HepG2 (cell line): ENCODE measurements at regions of chr6 and their contacts with region 1.

Region 1: GRCh38 chr6:18387061-18387721 is at the start of gene RNF144B:
- DNase-seq: peak; percentile 94
- ATAC-seq: peak; percentile 95
- H3K4me3 ChIP-seq: peak within 1 kb of the TSS; percentile 71 to 81 (median 73)
- H3K27ac ChIP-seq: peak within 1 kb of the TSS; percentile 52
- H3K4me1 ChIP-seq: peaks cover 61% of the 10 kb centered on the region
- H3K27me3 ChIP-seq: no peaks in the 10 kb centered on the region; a peak in 2 of 5 replicates
- CTCF ChIP-seq: peak; percentile 34; the same call in 1 of the 2 replicates
- EP300 ChIP-seq: no peak; a peak in 1 of 4 replicates
- POLR2A ChIP-seq: peak; percentile 58 to 76
- RAD21 ChIP-seq: peak; percentile 46
- total RNA-seq, gene RNF144B: 4.3 and 5.3 TPM in 2 replicates

Region 2: DNA sequence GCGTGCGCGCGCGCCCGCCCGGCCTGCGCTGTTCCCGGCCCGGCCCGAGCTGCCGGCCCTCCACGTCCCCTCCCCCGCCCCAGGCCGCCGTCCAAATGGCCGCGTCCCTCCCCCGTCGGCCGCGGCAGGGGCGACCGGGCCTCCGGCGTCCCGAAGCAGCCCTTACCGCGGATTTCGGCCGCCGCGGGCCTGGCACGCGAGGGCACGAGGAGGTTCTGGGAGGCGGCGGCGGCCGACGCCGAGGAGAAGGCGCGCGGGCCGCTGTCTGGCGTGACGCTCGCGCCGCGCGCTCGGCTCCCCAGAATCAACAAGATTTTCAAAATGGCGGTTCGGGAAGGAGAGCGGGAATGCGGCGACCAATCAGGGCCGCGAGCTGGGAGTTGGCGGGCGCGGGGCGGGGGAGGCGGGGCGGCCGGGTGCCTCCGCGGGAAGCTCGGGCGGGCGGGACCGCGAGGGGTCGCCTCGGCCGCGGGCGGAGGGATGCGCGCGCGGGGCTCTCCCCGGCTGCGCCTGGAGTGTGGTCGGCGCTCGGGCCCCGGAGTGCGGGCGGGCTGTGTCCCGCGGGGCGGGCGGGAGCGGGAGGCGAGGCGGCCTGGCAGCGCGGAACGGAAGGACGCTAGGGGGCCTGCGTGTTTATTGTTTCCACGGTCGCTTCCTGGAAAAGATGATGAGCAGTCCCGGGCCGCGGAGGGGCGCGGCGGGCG is 122.8 kb before region 1 on chr6 and contains the start of gene DEK:
- CTCF ChIA-PET with region 1: no interaction called
- POLR2A ChIA-PET with region 1: interaction called, 7 read pairs
- in situ Hi-C with region 1: no loop called
- intact Hi-C with region 1: loop called (anchors 2 kb)
- DNase-seq: peak; percentile 84
- ATAC-seq: peak; percentile 88
- H3K4me3 ChIP-seq: peak within 1 kb of the TSS; percentile 80 to 95 (median 90)
- H3K27ac ChIP-seq: peak within 1 kb of the TSS; percentile 92
- H3K4me1 ChIP-seq: peaks cover 84% of the 10 kb centered on the region
- H3K27me3 ChIP-seq: no peaks in the 10 kb centered on the region; a peak in 1 of 5 replicates
- CTCF ChIP-seq: peak; percentile 75
- EP300 ChIP-seq: no peak
- POLR2A ChIP-seq: peak; percentile 45 to 72
- RAD21 ChIP-seq: peak; percentile 27; the same call in 1 of the 2 replicates
- total RNA-seq, gene DEK: 276 and 337 TPM in 2 replicates

Region 3: DNA sequence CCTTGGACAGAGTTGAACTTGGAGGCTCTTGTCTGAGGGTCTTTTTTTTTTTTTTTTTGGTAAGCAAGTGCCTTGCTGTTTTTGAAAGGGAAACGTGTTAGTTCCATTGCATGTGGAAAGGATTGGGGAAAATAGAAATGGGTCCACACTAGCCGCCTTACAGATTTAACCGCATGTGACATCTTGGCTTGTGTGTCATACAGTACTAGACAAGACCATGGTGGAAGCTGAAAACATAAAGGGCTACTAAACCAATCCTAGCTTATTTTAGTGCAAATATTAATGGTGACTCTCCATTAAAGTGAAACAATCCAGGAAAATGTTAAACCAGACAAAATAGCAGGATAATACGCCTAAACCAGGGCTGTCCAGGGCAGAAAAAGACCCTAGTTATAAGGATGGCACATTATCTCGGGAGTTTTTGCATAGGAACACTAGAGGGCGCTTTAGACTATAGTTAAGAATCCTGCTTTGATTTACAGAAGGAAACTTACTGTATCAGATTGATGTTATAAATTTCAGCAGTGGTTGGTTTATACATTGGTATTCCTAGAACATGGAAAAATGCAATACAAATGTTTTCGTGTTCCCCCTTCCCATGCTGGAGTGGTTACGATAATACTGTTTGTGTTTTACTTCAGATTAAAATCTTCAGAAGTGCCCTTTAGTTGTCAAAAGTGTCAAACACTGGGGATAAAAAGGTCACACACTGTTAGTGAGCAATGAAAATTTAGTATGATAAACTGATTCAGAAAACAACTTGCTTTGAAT is 63.1 kb before region 1 on chr6:
- CTCF ChIA-PET with region 1: no interaction called
- POLR2A ChIA-PET with region 1: no interaction called
- in situ Hi-C with region 1: no loop called
- intact Hi-C with region 1: loop called (anchors 2 kb)
- DNase-seq: peak; percentile 54
- ATAC-seq: peak; percentile 90
- H3K4me3 ChIP-seq: no peak overlapping the region
- H3K27ac ChIP-seq: no peak overlapping the region
- H3K4me1 ChIP-seq: no peaks in the 10 kb centered on the region
- H3K27me3 ChIP-seq: no peaks in the 10 kb centered on the region
- CTCF ChIP-seq: peak; percentile 83
- EP300 ChIP-seq: no peak
- POLR2A ChIP-seq: no peak
- RAD21 ChIP-seq: peak; percentile 82

Region 4: GRCh38 chr6:18467741-18468502 is 80.7 kb after region 1 on chr6:
- CTCF ChIA-PET with region 1: no interaction called
- POLR2A ChIA-PET with region 1: interaction called, 11 read pairs
- in situ Hi-C with region 1: no loop called
- intact Hi-C with region 1: loop called (anchors 2 kb)
- DNase-seq: peak; percentile 85
- ATAC-seq: peak; percentile 96
- H3K4me3 ChIP-seq: peak overlapping the region in 2 of 3 experiments; percentile 5 to 29; a peak in 2 of 6 replicates
- H3K27ac ChIP-seq: peak overlapping the region; percentile 74
- H3K4me1 ChIP-seq: peaks cover 39% of the 10 kb centered on the region
- H3K27me3 ChIP-seq: no peaks in the 10 kb centered on the region
- CTCF ChIP-seq: no peak
- EP300 ChIP-seq: peak in 1 of 2 experiments; percentile 83; a peak in 2 of 4 replicates
- POLR2A ChIP-seq: no peak
- RAD21 ChIP-seq: no peak

Region 5: GRCh38 chr6:18503593-18504231 is 116.5 kb after region 1 on chr6:
- CTCF ChIA-PET with region 1: no interaction called
- POLR2A ChIA-PET with region 1: interaction called, 4 read pairs
- in situ Hi-C with region 1: no loop called
- intact Hi-C with region 1: loop called (anchors 1 kb)
- DNase-seq: peak; percentile 80
- ATAC-seq: peak; percentile 91
- H3K4me3 ChIP-seq: peak overlapping the region; percentile 46 to 63 (median 61)
- H3K27ac ChIP-seq: no peak overlapping the region
- H3K4me1 ChIP-seq: peaks cover 15% of the 10 kb centered on the region
- H3K27me3 ChIP-seq: peaks cover 0 to 5% of the 10 kb centered on the region in 2 experiments; a peak in 1 of 5 replicates
- CTCF ChIP-seq: peak; percentile 97
- EP300 ChIP-seq: no peak
- POLR2A ChIP-seq: no peak
- RAD21 ChIP-seq: peak; percentile 98